Right lobe of liver (tissue), 6 donors: ENCODE measurements at regions of chr18 and their contacts with region 1.

Region 1: DNA sequence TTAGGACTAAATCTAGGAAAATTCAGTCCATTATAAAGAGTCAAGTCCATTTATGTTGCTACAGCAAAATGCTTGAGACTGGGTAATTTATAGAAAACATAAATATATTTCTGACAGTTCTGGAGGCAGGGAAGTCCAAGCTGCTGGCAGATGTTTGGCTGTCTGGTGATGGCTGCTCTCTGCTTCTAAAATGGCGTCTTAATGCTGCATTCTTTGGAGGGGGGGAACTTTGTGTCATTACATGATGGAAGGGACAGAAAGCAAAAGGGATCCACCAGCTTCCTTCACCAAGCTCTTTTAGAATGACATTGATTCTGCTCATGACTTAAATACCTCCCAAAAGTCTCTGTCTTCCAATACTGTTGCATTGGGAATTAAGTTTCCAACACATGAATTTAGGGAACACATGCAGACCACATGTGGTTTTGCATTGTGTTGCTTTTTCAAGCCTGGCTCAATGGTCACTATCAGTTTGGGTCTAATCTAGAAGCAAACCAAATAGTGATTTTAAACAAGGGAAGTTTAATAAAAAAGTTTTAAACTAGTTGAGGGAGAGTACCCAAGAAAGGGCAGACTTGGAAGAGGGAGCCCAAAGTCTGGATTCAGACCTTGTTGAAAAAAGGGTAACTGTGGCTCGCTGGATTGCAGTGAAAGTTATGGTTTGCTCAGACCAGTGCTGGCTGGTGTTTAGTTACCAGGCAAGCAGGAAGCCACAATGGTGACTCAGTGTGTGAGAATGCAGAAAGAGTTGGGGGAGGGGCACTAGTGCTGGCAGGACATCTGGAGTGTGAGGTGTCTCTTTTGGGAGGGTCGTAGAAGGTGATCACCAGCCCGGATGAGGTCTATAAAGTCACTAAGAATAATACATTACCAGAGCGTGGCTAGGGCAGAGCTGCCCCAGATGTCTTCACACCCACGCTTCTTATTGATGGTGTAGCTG is 30.8 kb downstream of the C18orf54 start:
- DNase-seq: no peak
- ATAC-seq: peak in 3 of 4 donors; percentile 27 to 82 (median 40)
- H3K4me3 ChIP-seq: no peak overlapping the region
- H3K27ac ChIP-seq: no peak overlapping the region
- H3K4me1 ChIP-seq: no peaks in the 10 kb centered on the region
- H3K27me3 ChIP-seq: no peaks in the 10 kb centered on the region
- CTCF ChIP-seq: no peak
- POLR2A ChIP-seq: no peak

Region 2: GRCh38 chr18:54671291-54671881 is 282.9 kb after region 1 on chr18:
- intact Hi-C with region 1: loop called in 1 of 2 experiments (anchors 5 kb)
- DNase-seq: no peak
- ATAC-seq: peak in 3 of 4 donors; percentile 48 to 56 (median 54)
- H3K4me3 ChIP-seq: no peak overlapping the region
- H3K27ac ChIP-seq: no peak overlapping the region
- H3K4me1 ChIP-seq: no peaks in the 10 kb centered on the region
- H3K27me3 ChIP-seq: no peaks in the 10 kb centered on the region
- CTCF ChIP-seq: peak; percentile 54 to 68 (median 64)
- POLR2A ChIP-seq: no peak